ENCODE measurements at regions of chr17 and their contacts with region 1.

Region 1: DNA sequence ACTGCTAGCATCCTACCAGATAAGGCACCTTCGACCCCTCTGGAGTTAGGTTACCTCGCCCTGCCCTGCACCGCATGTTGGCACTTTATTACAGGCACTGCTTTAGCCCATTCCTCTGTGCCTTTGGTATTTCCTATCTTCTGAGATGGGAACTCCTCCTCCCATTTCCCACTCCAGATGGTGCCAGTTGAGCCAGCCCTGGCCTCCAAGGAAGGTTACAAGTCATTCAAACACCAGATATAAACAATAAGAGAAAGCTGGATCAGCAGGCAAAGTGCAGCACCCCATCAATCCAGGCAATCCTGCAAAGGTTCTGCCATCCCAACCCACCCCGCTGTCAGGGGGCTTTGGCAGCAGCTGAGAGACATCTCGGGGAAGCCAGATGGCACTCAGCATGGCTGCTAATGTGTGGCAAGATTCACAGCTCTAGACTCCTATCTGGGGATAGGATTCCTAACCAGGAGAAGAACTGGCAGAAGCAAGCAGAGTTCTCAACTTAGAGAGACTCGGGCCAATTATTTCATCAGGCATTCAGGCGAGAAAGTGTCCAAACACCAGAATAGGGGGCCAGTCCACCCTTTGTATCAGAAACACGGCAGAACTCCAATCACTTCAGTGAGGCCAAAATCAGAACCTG is 113.0 kb downstream of the COPRS start:
- DNase-seq: no peak
- H3K4me3 ChIP-seq: no peak overlapping the region
- H3K27ac ChIP-seq: no peak overlapping the region
- H3K4me1 ChIP-seq: peaks cover 17% of the 10 kb centered on the region
- H3K27me3 ChIP-seq: no peaks in the 10 kb centered on the region
- CTCF ChIP-seq: no peak
- POLR2A ChIP-seq: no peak

Region 2: DNA sequence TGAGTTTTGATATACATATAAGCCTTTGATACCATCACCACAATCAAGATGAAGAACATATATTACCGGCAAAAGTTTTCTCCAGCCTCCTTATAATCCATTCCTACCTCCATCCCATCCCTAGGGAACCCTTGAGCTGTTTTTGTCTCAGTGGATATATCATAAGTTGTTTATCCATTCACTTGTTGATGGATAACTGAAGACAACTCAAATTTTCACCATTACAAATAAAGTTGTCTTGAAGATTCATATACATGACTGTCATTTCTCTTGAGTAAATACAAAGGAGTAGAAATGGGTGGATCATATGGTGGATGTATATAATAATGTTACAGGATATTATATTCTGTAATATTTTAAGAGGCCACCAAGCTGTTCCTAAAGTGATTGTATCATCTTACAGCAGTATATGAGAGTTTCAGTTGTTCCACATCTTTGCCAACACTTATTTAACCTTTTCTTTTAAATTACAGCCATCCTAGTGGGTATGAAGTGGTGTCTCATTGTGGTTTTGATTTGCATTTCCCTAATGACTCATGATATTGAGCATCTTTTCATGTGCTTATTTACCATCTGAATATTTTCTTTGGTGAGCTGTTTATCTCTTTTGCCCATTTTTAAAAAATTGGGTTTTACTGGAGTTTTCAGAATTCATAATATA is 634.0 kb before region 1 on chr17:
- intact Hi-C with region 1: no loop called
- DNase-seq: no peak
- H3K4me3 ChIP-seq: no peak overlapping the region
- H3K27ac ChIP-seq: no peak overlapping the region
- H3K4me1 ChIP-seq: no peaks in the 10 kb centered on the region
- H3K27me3 ChIP-seq: no peaks in the 10 kb centered on the region
- CTCF ChIP-seq: no peak
- POLR2A ChIP-seq: no peak

Region 3: GRCh38 chr17:31787857-31788570 is 41.9 kb after region 1 on chr17:
- intact Hi-C with region 1: loop called (anchors 5 kb)
- DNase-seq: peak; percentile 85
- H3K4me3 ChIP-seq: no peak overlapping the region
- H3K27ac ChIP-seq: peak overlapping the region; percentile 11 to 51
- H3K4me1 ChIP-seq: no peaks in the 10 kb centered on the region
- H3K27me3 ChIP-seq: no peaks in the 10 kb centered on the region
- CTCF ChIP-seq: no peak
- POLR2A ChIP-seq: no peak